Activated T-helper 2 cell treated with anti-CD3 and anti-CD28 coated beads, Interferon-gamma antibody, Interleukin-2, Interleukin-4, amounts not matched to agents 10 μg/mL and 5 μg/mL and 100 μg/mL, durations not matched to agents 14 hours and 24 hours and 36 hours (primary cell): ENCODE measurements at regions of chr1 and their contacts with region 1.

Region 1: GRCh38 chr1:90919900-90920299 is 101.9 kb downstream of the ZNF644 start:
- DNase-seq: no peak
- H3K4me3 Mint-ChIP-seq: no peak overlapping the region
- H3K27ac Mint-ChIP-seq: no peak overlapping the region
- H3K4me1 Mint-ChIP-seq: peaks cover 29% of the 10 kb centered on the region
- H3K27me3 Mint-ChIP-seq: no peaks in the 10 kb centered on the region

Region 2: GRCh38 chr1:90964444-90965035 is 44.6 kb after region 1 on chr1:
- intact Hi-C with region 1: loop called (anchors 5 kb)
- DNase-seq: no peak
- H3K4me3 Mint-ChIP-seq: no peak overlapping the region
- H3K27ac Mint-ChIP-seq: no peak overlapping the region
- H3K4me1 Mint-ChIP-seq: peaks cover 12% of the 10 kb centered on the region
- H3K27me3 Mint-ChIP-seq: no peaks in the 10 kb centered on the region